Heart right ventricle (tissue), 16 donors: ENCODE measurements at regions of chr4 and their contacts with region 1.

Region 1: GRCh38 chr4:158590306-158590705 is 68.6 kb downstream of the RXFP1 start:
- DNase-seq: no peak
- ATAC-seq: no peak
- H3K4me3 ChIP-seq: no peak overlapping the region
- H3K27ac ChIP-seq: no peak overlapping the region
- H3K4me1 ChIP-seq: no peaks in the 10 kb centered on the region
- H3K27me3 ChIP-seq: no peaks in the 10 kb centered on the region
- CTCF ChIP-seq: no peak

Region 2: GRCh38 chr4:158268553-158268952 is 321.8 kb before region 1 on chr4:
- intact Hi-C with region 1: no loop called
- DNase-seq: no peak
- ATAC-seq: no peak
- H3K4me3 ChIP-seq: no peak overlapping the region
- H3K27ac ChIP-seq: no peak overlapping the region
- H3K4me1 ChIP-seq: no peaks in the 10 kb centered on the region
- H3K27me3 ChIP-seq: no peaks in the 10 kb centered on the region
- CTCF ChIP-seq: no peak

Region 3: DNA sequence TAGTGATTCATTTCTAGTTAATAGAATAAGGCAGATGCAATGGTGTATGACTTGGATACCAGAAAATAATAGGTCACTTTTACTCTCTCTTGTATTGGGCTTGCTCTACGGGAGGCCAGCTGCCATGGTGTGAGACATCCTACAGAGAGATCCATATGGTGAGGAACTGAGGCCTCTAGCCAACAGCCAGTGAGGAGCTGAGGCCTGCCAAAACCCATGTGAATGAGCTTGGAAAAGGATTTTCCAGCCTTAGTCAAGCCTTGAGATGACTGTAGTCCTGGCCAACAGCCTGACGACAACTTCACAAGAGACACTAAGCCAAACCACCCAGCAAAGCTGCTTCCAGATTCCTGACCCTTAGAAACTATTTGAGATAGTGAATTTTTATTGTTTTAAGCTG is 1812.8 kb after region 1 on chr4:
- intact Hi-C with region 1: loop called in 1 of 10 experiments (anchors 5 kb)
- DNase-seq: no peak
- ATAC-seq: no peak
- H3K4me3 ChIP-seq: no peak overlapping the region
- H3K27ac ChIP-seq: no peak overlapping the region
- H3K4me1 ChIP-seq: no peaks in the 10 kb centered on the region
- H3K27me3 ChIP-seq: no peaks in the 10 kb centered on the region
- CTCF ChIP-seq: no peak